ENCODE measurements at regions of chr7 and their contacts with region 1.

Region 1: GRCh38 chr7:134432296-134433152 is 26.4 kb downstream of the AKR1B1 start:
- DNase-seq: peak; percentile 92
- H3K4me3 ChIP-seq: peak overlapping the region; percentile 54 to 64
- H3K27ac ChIP-seq: peak overlapping the region; percentile 89 to 93
- H3K4me1 ChIP-seq: peaks cover 0 to 16% of the 10 kb centered on the region in 2 experiments; a peak in 1 of 4 replicates
- H3K27me3 ChIP-seq: no peaks in the 10 kb centered on the region
- CTCF ChIP-seq: peak; percentile 97
- EP300 ChIP-seq: 0 out of 4 replicates have a peak, but pooled peaks of 1 of the 2 experiments have one; percentile 23
- RAD21 ChIP-seq: peak; percentile 99

Region 2: GRCh38 chr7:134200970-134201369 is 231.6 kb before region 1 on chr7:
- CTCF ChIA-PET with region 1: no interaction called
- POLR2A ChIA-PET with region 1: no interaction called
- DNase-seq: no peak
- H3K4me3 ChIP-seq: no peak overlapping the region
- H3K27ac ChIP-seq: no peak overlapping the region
- H3K4me1 ChIP-seq: peaks cover 0 to 8% of the 10 kb centered on the region in 2 experiments; a peak in 2 of 4 replicates
- H3K27me3 ChIP-seq: no peaks in the 10 kb centered on the region
- CTCF ChIP-seq: no peak
- EP300 ChIP-seq: no peak
- RAD21 ChIP-seq: no peak

Region 3: GRCh38 chr7:134458806-134459698 is 26.5 kb after region 1 on chr7 and contains the start of gene AKR1B1:
- CTCF ChIA-PET with region 1: interaction called, 101 read pairs
- POLR2A ChIA-PET with region 1: interaction called, 16 read pairs
- DNase-seq: peak; percentile 99
- H3K4me3 ChIP-seq: peak within 1 kb of the TSS; percentile 90 to 92
- H3K27ac ChIP-seq: peak within 1 kb of the TSS; percentile 62 to 77
- H3K4me1 ChIP-seq: peaks cover 5 to 11% of the 10 kb centered on the region in 2 experiments; a peak in 3 of 4 replicates
- H3K27me3 ChIP-seq: no peaks in the 10 kb centered on the region
- CTCF ChIP-seq: peak; percentile 80
- EP300 ChIP-seq: peak in 1 of 2 experiments; percentile 11; a peak in 1 of 4 replicates
- RAD21 ChIP-seq: no peak
- polyA plus RNA-seq, gene AKR1B1: 216 and 224 TPM in 2 replicates

Region 4: GRCh38 chr7:134514663-134515062 is 82.1 kb after region 1 on chr7:
- CTCF ChIA-PET with region 1: interaction called, 154 read pairs
- POLR2A ChIA-PET with region 1: no interaction called
- DNase-seq: peak; percentile 68
- H3K4me3 ChIP-seq: no peak overlapping the region
- H3K27ac ChIP-seq: no peak overlapping the region
- H3K4me1 ChIP-seq: peaks cover 0 to 6% of the 10 kb centered on the region in 2 experiments; a peak in 1 of 4 replicates
- H3K27me3 ChIP-seq: 0 out of 2 replicates have a peak, but pooled peaks cover 16% of the 10 kb centered on the region
- CTCF ChIP-seq: peak; percentile 98
- EP300 ChIP-seq: no peak
- RAD21 ChIP-seq: peak; percentile 66

Region 5: GRCh38 chr7:134553976-134554375 is 121.5 kb after region 1 on chr7:
- CTCF ChIA-PET with region 1: interaction called, 71 read pairs
- POLR2A ChIA-PET with region 1: no interaction called
- DNase-seq: no peak
- H3K4me3 ChIP-seq: no peak overlapping the region
- H3K27ac ChIP-seq: no peak overlapping the region
- H3K4me1 ChIP-seq: peaks cover 0 to 2% of the 10 kb centered on the region in 2 experiments; a peak in 1 of 4 replicates
- H3K27me3 ChIP-seq: peaks cover 67% of the 10 kb centered on the region; the same call in 1 of the 2 replicates
- CTCF ChIP-seq: no peak; the same call in 1 of the 2 replicates
- EP300 ChIP-seq: no peak
- RAD21 ChIP-seq: no peak

Region 6: DNA sequence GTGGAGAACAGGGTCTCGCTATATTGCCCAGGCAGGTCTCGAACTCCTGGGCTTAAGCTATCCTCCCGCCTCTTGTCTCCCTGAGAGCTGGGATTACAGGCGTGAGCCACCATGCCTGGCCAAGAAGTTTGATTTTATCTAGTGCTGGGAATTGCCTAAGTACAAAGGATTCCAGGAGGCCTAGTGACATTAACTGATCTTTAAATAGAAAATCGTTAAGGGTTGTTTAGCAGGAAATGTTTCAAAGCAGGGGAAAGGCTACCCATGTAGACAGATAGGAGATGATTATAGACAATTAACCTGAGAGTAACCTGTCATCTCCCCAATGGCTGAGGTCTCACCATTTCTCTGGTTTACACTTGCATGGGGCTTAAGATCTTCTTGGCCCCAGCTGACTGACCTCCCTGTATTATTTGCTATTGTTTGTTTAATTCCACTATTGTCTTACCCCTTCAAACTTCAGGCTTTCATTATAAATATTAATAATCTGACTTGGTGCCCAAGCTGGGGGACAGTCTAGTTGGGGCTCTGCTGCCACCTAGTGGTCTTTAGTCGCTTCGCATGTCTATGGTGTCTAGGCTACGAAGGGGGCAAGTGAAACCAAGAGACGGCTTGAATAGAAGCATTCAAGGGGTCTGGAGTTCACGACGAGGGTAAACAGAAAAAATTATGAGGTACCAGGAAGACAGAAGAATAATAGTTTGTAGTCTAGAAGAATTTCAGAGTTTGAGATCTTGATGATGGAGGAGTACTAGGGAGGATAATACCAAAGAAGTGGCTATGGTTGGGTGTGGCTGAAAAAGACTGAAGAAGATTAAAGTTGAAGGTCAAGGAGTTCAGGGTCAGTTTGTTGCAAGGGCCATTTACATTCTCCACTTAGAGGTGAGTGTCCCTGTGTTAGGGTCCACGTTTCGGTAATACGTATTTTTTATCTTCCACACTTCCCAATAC is 173.7 kb after region 1 on chr7:
- CTCF ChIA-PET with region 1: interaction called, 87 read pairs
- POLR2A ChIA-PET with region 1: interaction called, 7 read pairs
- DNase-seq: peak; percentile 66
- H3K4me3 ChIP-seq: peak overlapping the region in 1 of 2 experiments; percentile 16; a peak in 1 of 4 replicates
- H3K27ac ChIP-seq: no peak overlapping the region; a peak in 1 of 4 replicates
- H3K4me1 ChIP-seq: no peaks in the 10 kb centered on the region; a peak in 2 of 4 replicates
- H3K27me3 ChIP-seq: no peaks in the 10 kb centered on the region
- CTCF ChIP-seq: peak; percentile 100
- EP300 ChIP-seq: no peak
- RAD21 ChIP-seq: peak; percentile 92